Psoas muscle (tissue), 8 donors: ENCODE measurements at regions of chr6 and their contacts with region 1.

Region 1: GRCh38 chr6:52263709-52264540 is 19.6 kb upstream of the IL17F start:
- DNase-seq: peak; percentile 39 to 64
- ATAC-seq: peak; percentile 73 to 89 (median 80)
- H3K4me3 ChIP-seq: no peak overlapping the region
- H3K27ac ChIP-seq: no peak overlapping the region
- H3K4me1 ChIP-seq: no peaks in the 10 kb centered on the region
- H3K27me3 ChIP-seq: no peaks in the 10 kb centered on the region
- CTCF ChIP-seq: peak; percentile 95

Region 2: DNA sequence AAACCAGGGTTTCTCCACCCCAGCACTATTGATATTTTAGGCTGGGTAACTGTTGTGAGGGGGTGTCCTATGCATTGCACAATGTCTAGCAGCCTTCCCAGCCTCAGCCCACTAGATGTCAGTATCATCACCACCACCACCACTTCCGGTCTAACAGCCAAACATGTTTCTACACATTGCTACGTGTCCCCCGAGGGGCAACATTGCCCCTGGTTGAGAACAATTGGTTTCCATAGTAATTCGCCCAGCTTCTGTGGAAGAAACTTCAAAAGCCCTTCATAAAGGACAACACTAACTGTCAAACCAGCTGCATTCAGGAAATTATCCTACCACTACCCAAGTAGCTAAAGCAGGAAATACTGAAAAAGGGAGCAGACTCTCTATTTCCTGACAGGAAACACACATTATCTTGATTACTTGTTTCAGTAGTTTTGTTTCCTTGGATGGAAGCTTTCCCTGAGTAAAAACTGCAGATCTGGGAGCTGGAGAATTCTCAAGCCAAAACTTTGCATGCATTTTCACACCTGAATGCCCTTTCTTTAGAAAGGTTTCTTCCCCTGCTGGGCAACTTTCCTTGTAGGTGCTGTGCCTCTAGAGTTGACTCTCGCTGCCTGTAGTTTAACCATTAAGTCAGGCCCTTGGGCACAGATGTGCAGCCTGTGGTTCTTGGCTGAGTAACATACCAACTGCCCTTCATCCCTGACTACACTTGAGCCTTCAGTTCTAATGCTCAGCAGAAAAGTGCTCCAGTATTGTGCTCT is 200.2 kb before region 1 on chr6:
- intact Hi-C with region 1: loop called (anchors 5 kb)
- DNase-seq: peak in 1 of 2 donors; percentile 57
- ATAC-seq: peak; percentile 84 to 99 (median 87)
- H3K4me3 ChIP-seq: peak overlapping the region; percentile 34
- H3K27ac ChIP-seq: no peak overlapping the region
- H3K4me1 ChIP-seq: peaks cover 6% of the 10 kb centered on the region
- H3K27me3 ChIP-seq: no peaks in the 10 kb centered on the region
- CTCF ChIP-seq: peak; percentile 59

Region 3: DNA sequence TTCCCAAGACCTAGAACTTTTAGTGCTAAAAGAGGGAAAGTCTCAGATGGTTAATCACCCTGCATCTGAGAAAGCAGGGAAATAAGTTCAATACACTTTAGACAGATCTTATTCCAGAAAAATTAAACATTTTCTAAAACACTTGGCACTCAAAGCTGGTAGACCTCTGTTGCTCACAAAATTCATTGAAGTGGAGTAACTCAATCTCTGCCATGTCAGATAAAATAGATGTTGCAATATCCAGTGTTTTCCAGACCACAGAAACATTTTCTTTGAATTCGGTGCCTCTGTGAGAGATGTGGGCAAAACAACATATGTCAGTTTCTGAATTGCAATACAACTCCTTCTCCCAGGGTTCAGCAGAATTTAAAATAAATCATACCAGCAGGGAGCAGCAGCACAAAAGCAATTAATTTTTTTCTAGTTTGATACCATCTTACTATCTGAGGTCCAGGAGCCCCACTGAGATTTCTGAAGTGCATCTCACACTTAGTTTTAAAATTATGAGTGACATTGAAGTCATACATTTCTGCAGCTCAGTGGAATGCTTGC is 165.2 kb before region 1 on chr6:
- intact Hi-C with region 1: loop called in 1 of 2 experiments (anchors 2 kb)
- DNase-seq: no peak
- ATAC-seq: peak in 1 of 4 donors; percentile 49
- H3K4me3 ChIP-seq: no peak overlapping the region
- H3K27ac ChIP-seq: no peak overlapping the region
- H3K4me1 ChIP-seq: peaks cover 28% of the 10 kb centered on the region
- H3K27me3 ChIP-seq: no peaks in the 10 kb centered on the region
- CTCF ChIP-seq: peak; percentile 30

Region 4: GRCh38 chr6:52109171-52109571 is 154.8 kb before region 1 on chr6:
- intact Hi-C with region 1: no loop called
- DNase-seq: no peak
- ATAC-seq: peak; percentile 83 to 90 (median 84)
- H3K4me3 ChIP-seq: no peak overlapping the region
- H3K27ac ChIP-seq: peak overlapping the region; percentile 92
- H3K4me1 ChIP-seq: peaks cover 10% of the 10 kb centered on the region
- H3K27me3 ChIP-seq: no peaks in the 10 kb centered on the region
- CTCF ChIP-seq: no peak

Region 5: GRCh38 chr6:52155791-52156576 is 107.9 kb before region 1 on chr6:
- intact Hi-C with region 1: loop called in 1 of 2 experiments (anchors 10 kb)
- DNase-seq: no peak
- ATAC-seq: peak; percentile 37 to 74 (median 53)
- H3K4me3 ChIP-seq: no peak overlapping the region
- H3K27ac ChIP-seq: peak overlapping the region; percentile 27
- H3K4me1 ChIP-seq: peaks cover 7% of the 10 kb centered on the region
- H3K27me3 ChIP-seq: no peaks in the 10 kb centered on the region
- CTCF ChIP-seq: no peak

Region 6: GRCh38 chr6:52162940-52163908 is 100.7 kb before region 1 on chr6:
- intact Hi-C with region 1: loop called (anchors 2 to 10 kb)
- DNase-seq: no peak
- ATAC-seq: peak in 2 of 4 donors; percentile 54 to 56
- H3K4me3 ChIP-seq: no peak overlapping the region
- H3K27ac ChIP-seq: no peak overlapping the region
- H3K4me1 ChIP-seq: no peaks in the 10 kb centered on the region
- H3K27me3 ChIP-seq: no peaks in the 10 kb centered on the region
- CTCF ChIP-seq: peak; percentile 68